ENCODE measurements at regions of chr16 and their contacts with region 1.

Region 1: GRCh38 chr16:79601931-79602627 is 1.5 kb upstream of the MAF start:
- DNase-seq: peak; percentile 71 to 92 (median 82)
- ATAC-seq: peak; percentile 6
- H3K4me3 ChIP-seq: peak overlapping the region; percentile 72
- H3K4me3 Mint-ChIP-seq: peak overlapping the region; percentile 98
- H3K27ac ChIP-seq: peak overlapping the region; percentile 27 to 32
- H3K27ac Mint-ChIP-seq: peak overlapping the region; percentile 93
- H3K4me1 ChIP-seq: peaks cover 20% of the 10 kb centered on the region
- H3K4me1 Mint-ChIP-seq: peaks cover 32% of the 10 kb centered on the region
- H3K27me3 ChIP-seq: no peaks in the 10 kb centered on the region
- H3K27me3 Mint-ChIP-seq: peaks cover 11% of the 10 kb centered on the region
- CTCF ChIP-seq: peak; percentile 91

Region 2: DNA sequence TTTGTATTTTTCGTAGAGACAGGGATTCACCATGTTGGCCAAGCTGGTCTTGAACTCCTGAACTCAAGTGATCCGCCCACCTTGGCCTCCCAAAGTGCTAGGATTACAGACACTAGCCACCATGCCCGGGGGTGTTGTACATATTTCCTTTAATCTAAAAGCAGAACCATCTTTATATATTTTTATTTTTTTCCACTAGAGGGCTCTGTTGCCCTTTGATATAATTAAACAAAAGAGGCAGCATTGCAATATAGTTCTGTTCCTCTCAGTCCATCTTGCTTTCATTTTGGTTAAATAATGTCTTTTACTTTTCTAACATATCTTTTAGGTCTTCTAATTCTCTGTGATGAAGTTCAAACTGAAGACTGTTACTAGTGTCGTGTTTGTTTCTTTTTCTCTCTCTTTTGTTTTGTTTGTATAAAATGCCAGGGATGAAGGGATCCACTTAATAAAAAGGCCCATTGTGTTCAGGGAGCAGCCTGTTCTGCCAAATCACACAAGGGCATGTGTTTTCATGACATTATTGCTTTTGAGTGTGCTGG is 1479.2 kb before region 1 on chr16:
- CTCF ChIA-PET with region 1: interaction called, 3 read pairs
- POLR2A ChIA-PET with region 1: no interaction called
- intact Hi-C with region 1: loop called (anchors 1 to 5 kb)
- DNase-seq: peak in 3 of 14 experiments; percentile 60 to 66 (median 61)
- ATAC-seq: peak; percentile 65
- H3K4me3 ChIP-seq: no peak overlapping the region
- H3K4me3 Mint-ChIP-seq: no peak overlapping the region
- H3K27ac ChIP-seq: no peak overlapping the region
- H3K27ac Mint-ChIP-seq: no peak overlapping the region
- H3K4me1 ChIP-seq: no peaks in the 10 kb centered on the region
- H3K4me1 Mint-ChIP-seq: peaks cover 4% of the 10 kb centered on the region
- H3K27me3 ChIP-seq: no peaks in the 10 kb centered on the region
- H3K27me3 Mint-ChIP-seq: no peaks in the 10 kb centered on the region
- CTCF ChIP-seq: peak; percentile 89

Region 3: GRCh38 chr16:78761427-78761826 is 840.7 kb before region 1 on chr16:
- CTCF ChIA-PET with region 1: no interaction called
- POLR2A ChIA-PET with region 1: no interaction called
- intact Hi-C with region 1: loop called in 1 of 2 experiments (anchors 10 kb)
- DNase-seq: no peak
- ATAC-seq: no peak
- H3K4me3 ChIP-seq: no peak overlapping the region
- H3K4me3 Mint-ChIP-seq: no peak overlapping the region
- H3K27ac ChIP-seq: no peak overlapping the region
- H3K27ac Mint-ChIP-seq: no peak overlapping the region
- H3K4me1 ChIP-seq: peaks cover 6% of the 10 kb centered on the region
- H3K4me1 Mint-ChIP-seq: no peaks in the 10 kb centered on the region
- H3K27me3 ChIP-seq: no peaks in the 10 kb centered on the region
- H3K27me3 Mint-ChIP-seq: no peaks in the 10 kb centered on the region
- CTCF ChIP-seq: no peak

Region 4: GRCh38 chr16:79042886-79043285 is 559.2 kb before region 1 on chr16:
- CTCF ChIA-PET with region 1: no interaction called
- POLR2A ChIA-PET with region 1: interaction called, 3 read pairs
- intact Hi-C with region 1: loop called in 1 of 2 experiments (anchors 5 kb)
- DNase-seq: peak in 8 of 14 experiments; percentile 5 to 75 (median 32)
- ATAC-seq: peak; percentile 93
- H3K4me3 ChIP-seq: no peak overlapping the region
- H3K4me3 Mint-ChIP-seq: no peak overlapping the region
- H3K27ac ChIP-seq: no peak overlapping the region
- H3K27ac Mint-ChIP-seq: peak overlapping the region; percentile 59
- H3K4me1 ChIP-seq: peaks cover 17% of the 10 kb centered on the region
- H3K4me1 Mint-ChIP-seq: peaks cover 38% of the 10 kb centered on the region
- H3K27me3 ChIP-seq: no peaks in the 10 kb centered on the region
- H3K27me3 Mint-ChIP-seq: no peaks in the 10 kb centered on the region
- CTCF ChIP-seq: no peak

Region 5: DNA sequence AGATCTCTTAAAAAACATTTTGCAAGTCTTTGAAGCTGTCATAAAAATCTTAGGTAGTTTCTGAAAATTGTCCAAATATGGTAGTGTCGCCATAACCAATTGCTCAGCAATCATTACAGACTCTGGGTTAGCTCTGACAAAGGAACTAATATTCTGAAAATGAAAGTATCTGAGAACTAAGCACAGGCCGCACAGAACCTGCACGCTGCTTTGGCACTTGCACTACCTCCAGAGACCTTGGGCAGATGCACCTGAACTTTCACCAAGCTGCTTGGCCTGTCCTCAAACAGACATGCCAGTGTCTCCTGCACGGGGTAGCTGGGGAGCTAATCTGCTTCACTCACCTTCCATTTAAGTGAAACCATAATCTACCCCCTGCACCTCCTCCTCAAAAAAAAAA is 318.5 kb before region 1 on chr16:
- CTCF ChIA-PET with region 1: no interaction called
- POLR2A ChIA-PET with region 1: interaction called, 11 read pairs
- intact Hi-C with region 1: loop called (anchors 2 to 5 kb)
- DNase-seq: peak in 11 of 14 experiments; percentile 13 to 80 (median 27)
- ATAC-seq: peak; percentile 72
- H3K4me3 ChIP-seq: no peak overlapping the region
- H3K4me3 Mint-ChIP-seq: peak overlapping the region; percentile 72
- H3K27ac ChIP-seq: peak overlapping the region in 1 of 2 donors; percentile 4
- H3K27ac Mint-ChIP-seq: peak overlapping the region; percentile 86
- H3K4me1 ChIP-seq: peaks cover 69% of the 10 kb centered on the region
- H3K4me1 Mint-ChIP-seq: peaks cover 78% of the 10 kb centered on the region
- H3K27me3 ChIP-seq: no peaks in the 10 kb centered on the region
- H3K27me3 Mint-ChIP-seq: no peaks in the 10 kb centered on the region
- CTCF ChIP-seq: no peak

Region 6: GRCh38 chr16:80526425-80527061 is 924.5 kb after region 1 on chr16:
- CTCF ChIA-PET with region 1: no interaction called
- POLR2A ChIA-PET with region 1: interaction called, 3 read pairs
- intact Hi-C with region 1: loop called in 1 of 2 experiments (anchors 5 kb)
- DNase-seq: peak; percentile 30 to 81 (median 44)
- ATAC-seq: peak; percentile 81
- H3K4me3 ChIP-seq: no peak overlapping the region
- H3K4me3 Mint-ChIP-seq: no peak overlapping the region
- H3K27ac ChIP-seq: no peak overlapping the region
- H3K27ac Mint-ChIP-seq: no peak overlapping the region
- H3K4me1 ChIP-seq: no peaks in the 10 kb centered on the region
- H3K4me1 Mint-ChIP-seq: no peaks in the 10 kb centered on the region
- H3K27me3 ChIP-seq: no peaks in the 10 kb centered on the region
- H3K27me3 Mint-ChIP-seq: no peaks in the 10 kb centered on the region
- CTCF ChIP-seq: peak; percentile 96